ENCODE measurements at regions of chr14 and their contacts with region 1.

Region 1: DNA sequence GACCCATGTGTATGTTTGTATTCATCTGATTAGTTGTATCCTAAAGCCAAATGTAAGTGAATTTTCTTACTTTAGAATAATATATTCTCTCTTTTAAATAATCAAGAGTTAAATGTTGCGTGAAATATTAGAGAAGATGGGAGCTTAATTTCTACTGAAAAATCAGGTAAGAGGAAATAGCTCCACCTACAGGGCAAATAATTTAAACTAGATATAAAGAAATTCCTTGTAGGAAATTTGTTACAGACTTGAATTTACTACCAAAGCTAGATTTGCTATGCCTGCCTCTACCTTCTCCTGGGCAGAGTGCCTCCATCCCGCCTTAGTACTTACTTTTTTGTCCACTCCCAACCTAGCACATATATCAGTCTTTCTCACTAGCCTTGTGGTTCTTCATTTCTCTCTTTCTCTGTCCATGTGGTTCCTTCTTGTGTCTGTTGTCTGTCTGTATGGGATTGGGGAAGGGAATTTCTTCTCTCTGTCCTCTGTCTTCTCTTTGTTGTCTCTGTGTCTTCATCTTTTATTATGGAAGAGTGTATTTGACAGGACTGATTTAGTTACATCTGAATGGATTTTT is 44.7 kb downstream of the PALS1 start:
- DNase-seq: no peak
- H3K4me3 Mint-ChIP-seq: no peak overlapping the region
- H3K27ac Mint-ChIP-seq: no peak overlapping the region
- H3K4me1 Mint-ChIP-seq: no peaks in the 10 kb centered on the region
- H3K27me3 Mint-ChIP-seq: no peaks in the 10 kb centered on the region

Region 2: GRCh38 chr14:66359500-66359899 is 926.5 kb before region 1 on chr14:
- CTCF ChIA-PET with region 1: interaction called, 14 read pairs
- POLR2A ChIA-PET with region 1: no interaction called
- intact Hi-C with region 1: loop called (anchors 10 kb)
- DNase-seq: no peak
- H3K4me3 Mint-ChIP-seq: no peak overlapping the region
- H3K27ac Mint-ChIP-seq: no peak overlapping the region
- H3K4me1 Mint-ChIP-seq: no peaks in the 10 kb centered on the region
- H3K27me3 Mint-ChIP-seq: no peaks in the 10 kb centered on the region

Region 3: DNA sequence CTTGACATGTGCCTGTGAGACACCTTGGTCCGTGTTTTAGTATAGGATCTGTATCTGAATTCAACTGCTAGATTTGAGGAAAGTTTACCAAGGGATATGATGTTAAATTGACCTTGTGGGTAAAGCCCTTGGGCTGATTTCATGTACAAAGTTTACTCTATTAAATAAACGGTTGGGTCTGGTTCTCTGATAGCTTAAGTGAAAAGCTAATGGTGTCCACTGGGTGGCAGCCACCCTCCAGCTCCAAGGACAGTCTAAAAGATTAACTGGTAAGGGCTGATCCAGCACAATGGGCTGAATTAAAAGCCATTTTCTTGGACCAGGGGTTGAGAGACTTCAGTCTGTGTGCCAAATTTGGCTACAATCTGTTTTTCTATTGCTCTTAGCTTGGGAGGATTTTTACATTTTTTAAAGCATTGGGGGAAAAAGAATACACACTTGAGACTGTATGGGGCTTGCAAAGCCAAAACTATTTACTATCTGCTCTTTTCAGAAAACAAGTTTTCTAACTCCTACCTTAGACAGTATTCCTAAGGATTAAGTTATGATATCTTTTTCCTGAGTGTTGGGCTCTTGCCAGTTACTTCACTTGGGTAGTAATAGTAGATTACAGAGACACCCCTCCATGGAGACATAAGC is 661.5 kb before region 1 on chr14:
- CTCF ChIA-PET with region 1: interaction called, 13 read pairs
- POLR2A ChIA-PET with region 1: no interaction called
- intact Hi-C with region 1: no loop called
- DNase-seq: peak; percentile 56
- H3K4me3 Mint-ChIP-seq: no peak overlapping the region
- H3K27ac Mint-ChIP-seq: no peak overlapping the region
- H3K4me1 Mint-ChIP-seq: peaks cover 4% of the 10 kb centered on the region
- H3K27me3 Mint-ChIP-seq: no peaks in the 10 kb centered on the region

Region 4: GRCh38 chr14:67018720-67019119 is 267.2 kb before region 1 on chr14:
- CTCF ChIA-PET with region 1: no interaction called
- POLR2A ChIA-PET with region 1: no interaction called
- intact Hi-C with region 1: no loop called
- DNase-seq: no peak
- H3K4me3 Mint-ChIP-seq: no peak overlapping the region
- H3K27ac Mint-ChIP-seq: no peak overlapping the region
- H3K4me1 Mint-ChIP-seq: no peaks in the 10 kb centered on the region
- H3K27me3 Mint-ChIP-seq: no peaks in the 10 kb centered on the region

Region 5: GRCh38 chr14:67187210-67187609 is 98.8 kb before region 1 on chr14:
- CTCF ChIA-PET with region 1: interaction called, 10 read pairs
- POLR2A ChIA-PET with region 1: no interaction called
- intact Hi-C with region 1: no loop called
- DNase-seq: no peak
- H3K4me3 Mint-ChIP-seq: no peak overlapping the region
- H3K27ac Mint-ChIP-seq: no peak overlapping the region
- H3K4me1 Mint-ChIP-seq: peaks cover 19% of the 10 kb centered on the region
- H3K27me3 Mint-ChIP-seq: no peaks in the 10 kb centered on the region

Region 6: DNA sequence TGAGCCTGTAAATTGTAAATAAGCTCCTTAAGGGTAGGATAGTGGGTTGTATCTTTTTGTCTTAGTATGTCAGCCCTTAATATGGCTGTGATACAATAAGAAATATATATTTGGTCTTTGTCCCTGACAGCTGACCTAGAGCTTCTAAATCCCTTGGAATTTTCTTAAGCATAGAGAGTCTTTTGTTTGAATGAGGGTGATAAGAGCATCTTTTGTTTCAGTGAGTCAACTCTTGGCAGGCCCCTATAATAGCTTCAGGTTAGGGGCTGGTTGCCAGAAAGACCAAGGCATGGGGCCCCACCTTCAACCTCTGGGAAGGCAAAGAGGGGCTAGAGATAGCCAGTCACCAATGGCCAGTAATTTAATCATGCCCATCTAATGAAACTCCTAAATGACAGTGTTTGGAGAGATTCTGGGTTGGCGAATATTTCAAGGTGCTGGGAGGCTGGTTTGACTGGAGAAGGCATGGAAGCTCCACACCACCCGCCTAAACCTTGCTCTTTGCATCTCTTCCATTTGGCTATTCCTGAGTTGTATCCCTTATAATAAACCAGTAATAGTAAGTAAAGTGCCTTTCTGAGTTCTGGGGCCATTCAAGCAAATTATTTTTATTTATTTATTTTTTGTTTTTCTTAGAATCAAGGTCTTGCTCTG is 34.3 kb before region 1 on chr14:
- CTCF ChIA-PET with region 1: interaction called, 11 read pairs
- POLR2A ChIA-PET with region 1: no interaction called
- intact Hi-C with region 1: no loop called
- DNase-seq: no peak
- H3K4me3 Mint-ChIP-seq: no peak overlapping the region
- H3K27ac Mint-ChIP-seq: no peak overlapping the region
- H3K4me1 Mint-ChIP-seq: peaks cover 17% of the 10 kb centered on the region
- H3K27me3 Mint-ChIP-seq: no peaks in the 10 kb centered on the region

Region 7: DNA sequence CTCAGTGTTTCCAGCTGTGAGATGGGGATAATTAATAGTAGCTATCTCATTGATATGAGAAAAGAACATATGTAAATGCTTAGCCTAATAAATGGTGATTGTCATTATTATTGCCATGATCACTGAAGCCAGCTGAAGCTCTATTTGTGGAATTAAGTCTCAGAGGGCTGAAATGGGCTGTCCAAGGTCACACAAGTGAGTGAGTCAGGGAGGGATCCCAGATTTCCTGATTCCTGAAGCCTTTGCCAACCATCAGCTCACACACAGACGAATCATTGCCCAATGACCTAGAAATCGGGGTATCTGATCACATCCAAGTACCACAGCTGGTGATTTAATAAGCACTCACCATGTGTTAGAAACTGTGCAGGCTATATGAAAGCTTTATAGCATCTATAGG is 224.2 kb after region 1 on chr14:
- CTCF ChIA-PET with region 1: no interaction called
- POLR2A ChIA-PET with region 1: no interaction called
- intact Hi-C with region 1: no loop called
- DNase-seq: no peak
- H3K4me3 Mint-ChIP-seq: no peak overlapping the region
- H3K27ac Mint-ChIP-seq: no peak overlapping the region
- H3K4me1 Mint-ChIP-seq: no peaks in the 10 kb centered on the region
- H3K27me3 Mint-ChIP-seq: no peaks in the 10 kb centered on the region

Measured in activated CD4-positive, alpha-beta memory T cell treated with anti-CD3 and anti-CD28 coated beads for 36 hours (primary cell).